Sigmoid colon (tissue), 7 donors: ENCODE measurements at regions of chr6 and their contacts with region 1.

Region 1: GRCh38 chr6:83514866-83515466 is 2.6 kb downstream of the PRSS35 start:
- DNase-seq: no peak
- H3K4me3 ChIP-seq: no peak overlapping the region
- H3K27ac ChIP-seq: no peak overlapping the region
- H3K4me1 ChIP-seq: peaks cover 0 to 14% (median 10%) of the 10 kb centered on the region in 4 donors
- H3K27me3 ChIP-seq: no peaks in the 10 kb centered on the region
- CTCF ChIP-seq: peak; percentile 36 to 73 (median 70)
- EP300 ChIP-seq: no peak
- POLR2A ChIP-seq: no peak

Region 2: GRCh38 chr6:83221889-83222479 is 293.0 kb before region 1 on chr6:
- intact Hi-C with region 1: loop called (anchors 1 kb)
- DNase-seq: no peak
- H3K4me3 ChIP-seq: no peak overlapping the region
- H3K27ac ChIP-seq: no peak overlapping the region
- H3K4me1 ChIP-seq: no peaks in the 10 kb centered on the region
- H3K27me3 ChIP-seq: no peaks in the 10 kb centered on the region
- CTCF ChIP-seq: peak in 2 of 4 experiments; percentile 11 to 48
- EP300 ChIP-seq: no peak
- POLR2A ChIP-seq: no peak

Region 3: GRCh38 chr6:83417880-83418663 is 96.9 kb before region 1 on chr6:
- intact Hi-C with region 1: loop called (anchors 2 kb)
- DNase-seq: no peak
- H3K4me3 ChIP-seq: no peak overlapping the region
- H3K27ac ChIP-seq: no peak overlapping the region
- H3K4me1 ChIP-seq: no peaks in the 10 kb centered on the region
- H3K27me3 ChIP-seq: no peaks in the 10 kb centered on the region
- CTCF ChIP-seq: peak; percentile 27 to 60 (median 54)
- EP300 ChIP-seq: no peak
- POLR2A ChIP-seq: no peak